ENCODE measurements at regions of chr14 and their contacts with region 1.

Region 1: DNA sequence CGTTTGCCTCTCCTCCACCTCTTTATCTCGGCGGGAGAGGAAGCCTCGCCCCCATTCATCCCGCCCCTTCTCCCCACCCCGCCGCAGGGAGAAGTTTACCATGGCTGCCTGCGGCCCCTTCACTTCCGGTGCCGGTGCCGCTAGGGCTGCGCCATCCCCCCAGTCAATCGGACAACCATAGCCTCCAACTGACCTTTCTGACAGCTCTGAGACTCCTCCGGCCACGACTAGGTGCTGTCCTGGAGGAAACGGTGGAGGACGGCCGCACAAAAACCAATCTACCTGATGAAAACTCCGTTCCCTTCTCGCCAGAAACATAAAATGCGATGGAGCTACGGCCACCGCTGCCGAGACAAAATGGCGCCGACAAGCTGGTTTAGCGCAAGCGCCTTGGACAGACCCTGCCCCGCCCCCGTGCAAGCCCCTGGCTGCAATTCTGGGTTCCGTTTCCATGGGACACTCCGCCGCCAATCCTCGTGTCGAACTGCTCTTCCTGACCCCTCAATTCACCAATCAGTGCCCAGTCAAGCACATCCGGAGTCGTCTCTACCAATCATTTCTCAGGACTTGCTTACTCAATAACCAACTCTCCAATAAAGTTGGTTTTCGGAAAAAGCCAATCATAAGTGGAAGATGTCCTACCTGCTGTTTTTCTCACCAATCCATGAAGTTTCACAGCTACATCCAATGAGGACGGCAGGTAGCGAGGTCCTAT is 436 bp upstream of the ARID4A start:
- DNase-seq: peak; percentile 90 to 100 (median 99)
- ATAC-seq: peak; percentile 91
- H3K4me3 ChIP-seq: peak overlapping the region; percentile 91
- H3K4me3 Mint-ChIP-seq: no peak overlapping the region
- H3K27ac ChIP-seq: peak overlapping the region; percentile 94
- H3K27ac Mint-ChIP-seq: no peak overlapping the region
- H3K4me1 ChIP-seq: peaks cover 17 to 23% of the 10 kb centered on the region in 2 donors
- H3K4me1 Mint-ChIP-seq: peaks cover 36 to 64% (median 55%) of the 10 kb centered on the region in 7 donors
- H3K27me3 ChIP-seq: no peaks in the 10 kb centered on the region
- H3K27me3 Mint-ChIP-seq: no peaks in the 10 kb centered on the region

Region 2: DNA sequence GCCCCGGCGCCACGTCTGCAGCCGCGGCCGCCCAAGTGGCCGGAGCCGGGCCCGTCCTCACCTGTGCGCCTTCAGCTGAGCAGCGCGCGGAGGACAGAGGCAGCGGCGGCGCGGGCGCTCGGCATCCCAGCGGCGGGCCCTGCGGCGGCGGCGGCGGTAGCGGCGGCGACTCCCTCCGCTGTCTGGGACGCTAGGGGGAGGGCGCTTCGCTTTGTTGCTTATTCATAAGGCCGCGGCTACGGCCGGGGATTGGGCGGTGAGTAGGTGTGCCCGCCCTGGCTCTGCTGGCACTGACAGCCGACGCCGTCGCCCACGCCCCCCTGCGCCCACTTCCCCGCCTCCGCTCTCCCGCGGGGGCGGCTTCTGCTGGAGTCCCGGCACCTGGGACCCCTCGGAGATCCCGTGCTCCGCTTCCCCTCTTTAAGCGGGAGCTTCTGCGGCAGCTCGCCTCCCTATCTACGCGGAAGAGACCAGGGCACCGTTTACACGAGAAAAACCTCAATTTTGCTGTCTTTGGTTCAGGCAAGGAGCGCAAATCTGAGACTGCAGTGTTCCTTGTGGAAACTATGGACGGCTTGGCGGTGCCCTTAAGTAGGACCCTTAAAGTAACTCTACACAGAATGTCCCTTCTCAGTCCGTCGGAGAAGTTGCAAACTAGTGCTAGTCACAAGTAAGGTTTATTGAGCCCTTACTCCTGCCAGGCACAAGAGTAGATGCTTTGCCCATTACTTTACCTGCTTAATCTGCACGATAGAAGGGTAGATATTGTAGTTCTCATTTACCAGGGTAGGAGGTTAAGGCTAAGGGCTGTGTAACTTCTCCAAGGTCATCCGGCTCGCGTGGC is 145.7 kb before region 1 on chr14 and contains the start of gene ARMH4:
- CTCF ChIA-PET with region 1: no interaction called
- POLR2A ChIA-PET with region 1: no interaction called
- intact Hi-C with region 1: loop called in 1 of 2 experiments (anchors 1 kb)
- DNase-seq: peak; percentile 28 to 66 (median 54)
- ATAC-seq: peak; percentile 94
- H3K4me3 ChIP-seq: peak within 1 kb of the TSS; percentile 71
- H3K4me3 Mint-ChIP-seq: peak within 1 kb of the TSS; percentile 75 to 86 (median 80)
- H3K27ac ChIP-seq: no peak within 1 kb of the TSS
- H3K27ac Mint-ChIP-seq: no peak within 1 kb of the TSS
- H3K4me1 ChIP-seq: peaks cover 7 to 8% of the 10 kb centered on the region in 2 donors
- H3K4me1 Mint-ChIP-seq: peaks cover 9 to 21% (median 13%) of the 10 kb centered on the region in 7 donors
- H3K27me3 ChIP-seq: peaks cover 0 to 4% of the 10 kb centered on the region in 2 donors
- H3K27me3 Mint-ChIP-seq: peaks cover 56 to 73% (median 68%) of the 10 kb centered on the region in 5 donors
- total RNA-seq, gene ARMH4: not detected

Region 3: DNA sequence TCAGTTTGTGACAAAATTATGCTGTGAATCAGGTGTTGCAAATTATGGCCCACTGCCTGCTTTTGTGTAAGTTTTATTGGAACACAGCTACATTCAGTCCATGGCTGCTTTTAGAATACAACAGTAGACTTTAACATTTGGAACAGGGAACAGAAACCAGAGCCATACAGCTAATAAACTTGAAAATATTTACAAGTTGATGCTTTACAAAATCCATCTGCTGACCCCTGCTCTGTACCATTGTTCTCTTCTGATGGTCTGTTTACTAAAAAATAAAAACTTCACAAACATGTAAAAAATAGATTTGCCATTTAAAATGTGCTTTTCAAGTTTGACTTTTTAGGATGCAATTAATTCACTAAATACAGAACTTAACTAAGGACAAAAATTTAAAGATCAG is 32.5 kb before region 1 on chr14:
- CTCF ChIA-PET with region 1: no interaction called
- POLR2A ChIA-PET with region 1: interaction called, 11 read pairs
- intact Hi-C with region 1: no loop called
- DNase-seq: no peak
- ATAC-seq: no peak
- H3K4me3 ChIP-seq: no peak overlapping the region
- H3K4me3 Mint-ChIP-seq: no peak overlapping the region
- H3K27ac ChIP-seq: no peak overlapping the region
- H3K27ac Mint-ChIP-seq: peak overlapping the region in 7 of 9 donors; percentile 9 to 79 (median 65)
- H3K4me1 ChIP-seq: no peaks in the 10 kb centered on the region
- H3K4me1 Mint-ChIP-seq: peaks cover under 1 to 23% (median 19%) of the 10 kb centered on the region in 7 donors
- H3K27me3 ChIP-seq: no peaks in the 10 kb centered on the region
- H3K27me3 Mint-ChIP-seq: no peaks in the 10 kb centered on the region

Region 4: DNA sequence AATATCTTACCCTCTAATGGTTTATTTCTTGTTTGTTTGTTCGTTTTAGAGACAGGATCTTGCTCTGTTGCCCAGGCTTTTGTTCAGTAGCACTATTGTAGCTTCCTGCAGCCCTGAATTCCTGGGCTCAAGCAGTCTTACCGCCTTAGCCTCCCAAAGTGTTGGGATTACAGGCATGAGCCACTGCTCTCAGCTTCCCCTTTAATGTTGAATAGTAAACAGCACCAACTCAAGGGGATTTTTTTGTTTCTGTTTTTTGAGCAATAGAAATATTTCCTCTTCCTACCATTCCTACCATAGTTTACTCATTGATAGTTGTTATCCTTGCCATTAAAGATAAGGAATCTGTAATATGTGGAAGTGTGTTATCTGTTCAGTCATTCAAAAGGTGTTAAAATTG is 11.2 kb after region 1 on chr14:
- CTCF ChIA-PET with region 1: interaction called, 3 read pairs
- POLR2A ChIA-PET with region 1: interaction called, 19 read pairs
- intact Hi-C with region 1: no loop called
- DNase-seq: no peak
- ATAC-seq: no peak
- H3K4me3 ChIP-seq: no peak overlapping the region
- H3K4me3 Mint-ChIP-seq: no peak overlapping the region
- H3K27ac ChIP-seq: no peak overlapping the region
- H3K27ac Mint-ChIP-seq: peak overlapping the region in 5 of 9 donors; percentile 20 to 49 (median 33)
- H3K4me1 ChIP-seq: no peaks in the 10 kb centered on the region
- H3K4me1 Mint-ChIP-seq: peaks cover 8 to 51% (median 31%) of the 10 kb centered on the region in 7 donors
- H3K27me3 ChIP-seq: no peaks in the 10 kb centered on the region
- H3K27me3 Mint-ChIP-seq: no peaks in the 10 kb centered on the region

Region 5: GRCh38 chr14:58395812-58396788 is 98.2 kb after region 1 on chr14 and contains the start of gene TOMM20L:
- CTCF ChIA-PET with region 1: interaction called, 3 read pairs
- POLR2A ChIA-PET with region 1: interaction called, 18 read pairs
- intact Hi-C with region 1: loop called in 1 of 2 experiments (anchors 1 kb)
- DNase-seq: peak; percentile 54 to 84 (median 72)
- ATAC-seq: peak; percentile 92
- H3K4me3 ChIP-seq: peak within 1 kb of the TSS; percentile 33
- H3K4me3 Mint-ChIP-seq: peak within 1 kb of the TSS; percentile 78 to 93 (median 86)
- H3K27ac ChIP-seq: peak within 1 kb of the TSS; percentile 72
- H3K27ac Mint-ChIP-seq: peak within 1 kb of the TSS; percentile 66 to 97 (median 95)
- H3K4me1 ChIP-seq: peaks cover 8 to 9% of the 10 kb centered on the region in 2 donors
- H3K4me1 Mint-ChIP-seq: peaks cover 6 to 19% (median 12%) of the 10 kb centered on the region in 7 donors
- H3K27me3 ChIP-seq: no peaks in the 10 kb centered on the region
- H3K27me3 Mint-ChIP-seq: peaks cover 0 to 2% (median 0%) of the 10 kb centered on the region in 5 donors
- total RNA-seq, gene TOMM20L: not detected

Region 6: DNA sequence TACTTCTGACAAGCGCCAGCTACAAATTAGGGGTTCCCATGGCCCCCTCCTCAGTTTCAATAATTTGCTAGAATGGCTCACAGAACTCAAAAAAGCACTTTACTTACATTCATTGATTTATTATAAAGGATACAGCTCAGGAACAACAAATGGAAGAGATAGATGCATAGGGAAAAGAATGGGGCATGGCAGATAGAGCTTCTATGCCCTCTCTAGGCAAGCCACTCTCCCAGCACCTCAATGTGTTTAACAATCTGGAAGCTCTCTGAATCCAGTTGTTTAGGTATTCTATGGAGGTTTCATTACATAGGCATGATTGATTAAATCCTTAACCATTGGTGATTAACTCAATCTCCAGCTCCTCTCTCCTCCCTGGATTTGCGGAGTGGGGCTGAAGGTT is 706.1 kb after region 1 on chr14:
- CTCF ChIA-PET with region 1: no interaction called
- POLR2A ChIA-PET with region 1: no interaction called
- intact Hi-C with region 1: no loop called
- DNase-seq: no peak
- ATAC-seq: no peak
- H3K4me3 ChIP-seq: no peak overlapping the region
- H3K4me3 Mint-ChIP-seq: no peak overlapping the region
- H3K27ac ChIP-seq: no peak overlapping the region
- H3K27ac Mint-ChIP-seq: no peak overlapping the region
- H3K4me1 ChIP-seq: no peaks in the 10 kb centered on the region
- H3K4me1 Mint-ChIP-seq: no peaks in the 10 kb centered on the region
- H3K27me3 ChIP-seq: no peaks in the 10 kb centered on the region
- H3K27me3 Mint-ChIP-seq: peaks cover 2 to 19% (median 4%) of the 10 kb centered on the region in 5 donors

Region 7: GRCh38 chr14:59483900-59484638 is 1186.2 kb after region 1 on chr14 and contains the starts of genes JKAMP and L3HYPDH:
- CTCF ChIA-PET with region 1: no interaction called
- POLR2A ChIA-PET with region 1: interaction called, 5 read pairs
- intact Hi-C with region 1: loop called in 1 of 2 experiments (anchors 1 kb)
- DNase-seq: peak; percentile 93 to 98 (median 97)
- ATAC-seq: peak; percentile 97
- H3K4me3 ChIP-seq: peak within 1 kb of the TSS; percentile 81
- H3K4me3 Mint-ChIP-seq: peak within 1 kb of the TSS; percentile 89 to 98 (median 96)
- H3K27ac ChIP-seq: peak within 1 kb of the TSS; percentile 84
- H3K27ac Mint-ChIP-seq: peak within 1 kb of the TSS; percentile 85 to 96 (median 94)
- H3K4me1 ChIP-seq: peaks cover 18 to 20% of the 10 kb centered on the region in 2 donors
- H3K4me1 Mint-ChIP-seq: peaks cover 44 to 82% (median 76%) of the 10 kb centered on the region in 7 donors
- H3K27me3 ChIP-seq: no peaks in the 10 kb centered on the region
- H3K27me3 Mint-ChIP-seq: no peaks in the 10 kb centered on the region
- total RNA-seq, gene JKAMP: 12.2 to 33.7 (median 32.5) TPM
- total RNA-seq, gene L3HYPDH: 18.9 to 55.9 (median 24.2) TPM